ENCODE measurements at regions of chr1 and their contacts with region 1.

Region 1: DNA sequence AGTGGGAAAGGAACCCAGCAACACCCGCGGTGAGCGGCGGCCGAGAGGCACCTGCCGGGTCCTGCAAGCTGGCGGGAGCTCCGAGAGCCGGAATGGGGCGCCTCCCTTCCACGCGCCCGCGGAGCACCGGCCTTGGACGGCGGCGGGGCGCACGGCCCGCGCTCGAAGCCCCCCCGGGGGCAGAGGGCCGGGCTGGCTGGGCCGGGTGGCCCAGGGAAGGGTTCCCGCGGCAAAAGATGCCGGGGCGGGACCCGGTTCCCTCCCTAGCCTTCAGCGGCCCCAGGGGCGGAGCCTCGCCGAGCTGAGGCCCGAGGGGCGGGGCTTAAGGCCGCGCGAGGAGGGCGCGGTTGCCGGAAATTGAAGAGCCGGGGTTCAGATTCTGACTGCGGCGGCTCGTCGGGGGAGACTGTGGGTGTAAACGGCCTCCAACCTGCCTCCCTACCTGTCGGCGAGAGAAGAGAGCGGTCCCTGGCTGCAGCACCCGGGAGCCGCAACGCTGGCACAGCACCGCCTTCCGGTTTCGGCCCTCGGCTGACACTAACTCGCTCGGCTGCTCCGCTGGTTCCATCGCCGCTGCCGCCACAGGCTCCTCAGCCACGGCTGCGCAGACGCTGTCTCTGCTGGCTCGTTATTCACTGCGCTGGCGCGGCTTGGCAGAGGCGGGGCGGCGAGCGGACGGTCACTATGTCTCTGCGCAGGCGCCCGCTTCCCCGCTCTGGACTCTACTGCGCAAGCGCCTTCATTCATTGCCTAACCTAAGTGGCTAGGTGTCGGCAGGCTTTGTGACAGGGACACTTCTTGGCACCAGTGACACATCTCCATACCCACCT is at the start of gene RABIF:
- DNase-seq: peak; percentile 95 to 97 (median 97)
- H3K4me3 ChIP-seq: peak within 1 kb of the TSS; percentile 93 to 95
- H3K4me3 Mint-ChIP-seq: peak within 1 kb of the TSS; percentile 93 to 99 (median 97)
- H3K27ac ChIP-seq: peak within 1 kb of the TSS; percentile 73
- H3K27ac Mint-ChIP-seq: peak within 1 kb of the TSS; percentile 89 to 99 (median 97)
- H3K4me1 ChIP-seq: peaks cover 21% of the 10 kb centered on the region
- H3K4me1 Mint-ChIP-seq: peaks cover 13 to 38% (median 26%) of the 10 kb centered on the region in 4 donors
- H3K27me3 ChIP-seq: no peaks in the 10 kb centered on the region
- H3K27me3 Mint-ChIP-seq: no peaks in the 10 kb centered on the region
- total RNA-seq, gene RABIF: 17.3 to 18.7 TPM

Region 2: GRCh38 chr1:202810615-202811295 is 78.0 kb before region 1 on chr1 and contains the start of gene PCAT6:
- CTCF ChIA-PET with region 1: interaction called, 5 read pairs
- POLR2A ChIA-PET with region 1: interaction called, 13 read pairs
- intact Hi-C with region 1: loop called (anchors 1 kb)
- DNase-seq: peak; percentile 82 to 88 (median 83)
- H3K4me3 ChIP-seq: peak within 1 kb of the TSS; percentile 88 to 93
- H3K4me3 Mint-ChIP-seq: peak within 1 kb of the TSS; percentile 89 to 97 (median 94)
- H3K27ac ChIP-seq: peak within 1 kb of the TSS; percentile 49
- H3K27ac Mint-ChIP-seq: peak within 1 kb of the TSS; percentile 71 to 96 (median 92)
- H3K4me1 ChIP-seq: peaks cover 36% of the 10 kb centered on the region
- H3K4me1 Mint-ChIP-seq: peaks cover 26 to 45% (median 35%) of the 10 kb centered on the region in 4 donors
- H3K27me3 ChIP-seq: no peaks in the 10 kb centered on the region
- H3K27me3 Mint-ChIP-seq: peaks cover 0 to 1% of the 10 kb centered on the region in 2 donors
- total RNA-seq, gene PCAT6: not detected

Region 3: GRCh38 chr1:202957733-202958543 is 69.2 kb after region 1 on chr1 and contains the start of gene ADIPOR1:
- CTCF ChIA-PET with region 1: no interaction called
- POLR2A ChIA-PET with region 1: no interaction called
- intact Hi-C with region 1: loop called (anchors 2 kb)
- DNase-seq: peak; percentile 93 to 94 (median 94)
- H3K4me3 ChIP-seq: peak within 1 kb of the TSS; percentile 44 to 78
- H3K4me3 Mint-ChIP-seq: peak within 1 kb of the TSS; percentile 89 to 97 (median 94)
- H3K27ac ChIP-seq: peak within 1 kb of the TSS; percentile 94
- H3K27ac Mint-ChIP-seq: peak within 1 kb of the TSS; percentile 91 to 99 (median 97)
- H3K4me1 ChIP-seq: peaks cover 54% of the 10 kb centered on the region
- H3K4me1 Mint-ChIP-seq: peaks cover 30 to 55% (median 47%) of the 10 kb centered on the region in 4 donors
- H3K27me3 ChIP-seq: no peaks in the 10 kb centered on the region
- H3K27me3 Mint-ChIP-seq: no peaks in the 10 kb centered on the region
- total RNA-seq, gene ADIPOR1: 52.6 to 58.3 TPM

Region 4: GRCh38 chr1:202968840-202969295 is 80.1 kb after region 1 on chr1:
- CTCF ChIA-PET with region 1: interaction called, 3 read pairs
- POLR2A ChIA-PET with region 1: interaction called, 13 read pairs
- intact Hi-C with region 1: loop called (anchors 1 kb)
- DNase-seq: peak; percentile 21 to 59 (median 29)
- H3K4me3 ChIP-seq: no peak overlapping the region
- H3K4me3 Mint-ChIP-seq: peak overlapping the region in 5 of 8 donors; percentile 9 to 68 (median 35)
- H3K27ac ChIP-seq: peak overlapping the region; percentile 52
- H3K27ac Mint-ChIP-seq: peak overlapping the region; percentile 3 to 87 (median 75)
- H3K4me1 ChIP-seq: peaks cover 29% of the 10 kb centered on the region
- H3K4me1 Mint-ChIP-seq: peaks cover 14 to 36% (median 22%) of the 10 kb centered on the region in 4 donors
- H3K27me3 ChIP-seq: no peaks in the 10 kb centered on the region
- H3K27me3 Mint-ChIP-seq: no peaks in the 10 kb centered on the region

Region 5: GRCh38 chr1:202998836-202999750 is 110.3 kb after region 1 on chr1:
- CTCF ChIA-PET with region 1: interaction called, 13 read pairs
- POLR2A ChIA-PET with region 1: interaction called, 3 read pairs
- intact Hi-C with region 1: no loop called
- DNase-seq: peak; percentile 57 to 69 (median 64)
- H3K4me3 ChIP-seq: no peak overlapping the region
- H3K4me3 Mint-ChIP-seq: peak overlapping the region in 5 of 8 donors; percentile 1 to 52 (median 11)
- H3K27ac ChIP-seq: no peak overlapping the region
- H3K27ac Mint-ChIP-seq: peak overlapping the region in 1 of 7 donors; percentile 10
- H3K4me1 ChIP-seq: peaks cover 4% of the 10 kb centered on the region
- H3K4me1 Mint-ChIP-seq: peaks cover 5 to 12% (median 6%) of the 10 kb centered on the region in 4 donors
- H3K27me3 ChIP-seq: peaks cover 7% of the 10 kb centered on the region
- H3K27me3 Mint-ChIP-seq: peaks cover 15 to 16% of the 10 kb centered on the region in 2 donors

Region 6: GRCh38 chr1:203006948-203007871 is 118.5 kb after region 1 on chr1 and contains the start of gene TMEM183A:
- CTCF ChIA-PET with region 1: interaction called, 5 read pairs
- POLR2A ChIA-PET with region 1: interaction called, 20 read pairs
- intact Hi-C with region 1: loop called (anchors 1 kb)
- DNase-seq: peak; percentile 92 to 96 (median 93)
- H3K4me3 ChIP-seq: peak within 1 kb of the TSS; percentile 75 to 97
- H3K4me3 Mint-ChIP-seq: peak within 1 kb of the TSS; percentile 91 to 99 (median 94)
- H3K27ac ChIP-seq: peak within 1 kb of the TSS; percentile 93
- H3K27ac Mint-ChIP-seq: peak within 1 kb of the TSS; percentile 97 to 99 (median 98)
- H3K4me1 ChIP-seq: peaks cover 32% of the 10 kb centered on the region
- H3K4me1 Mint-ChIP-seq: peaks cover 18 to 46% (median 33%) of the 10 kb centered on the region in 4 donors
- H3K27me3 ChIP-seq: no peaks in the 10 kb centered on the region
- H3K27me3 Mint-ChIP-seq: no peaks in the 10 kb centered on the region
- total RNA-seq, gene TMEM183A: 69.3 to 70.3 TPM

Measured in CD4-positive, alpha-beta memory T cell (primary cell).